ENCODE measurements at regions of chr11 and their contacts with region 1.

Region 1: GRCh38 chr11:61891331-61892084 is at the start of gene FADS3:
- DNase-seq: peak; percentile 94
- ATAC-seq: peak; percentile 91
- total RNA-seq, gene FADS3: 76.0 TPM

Region 2: GRCh38 chr11:61792310-61793085 is 99.0 kb before region 1 on chr11 and contains the starts of genes FEN1 and TMEM258:
- intact Hi-C with region 1: loop called (anchors 5 kb)
- DNase-seq: peak; percentile 93
- ATAC-seq: peak; percentile 95
- total RNA-seq, gene FEN1: 6.3 TPM
- total RNA-seq, gene TMEM258: 123 TPM

Region 3: GRCh38 chr11:61816736-61817455 is 74.6 kb before region 1 on chr11 and contains the start of gene FADS1:
- intact Hi-C with region 1: loop called (anchors 5 kb)
- DNase-seq: peak; percentile 94
- ATAC-seq: peak; percentile 69
- total RNA-seq, gene FADS1: 21.3 TPM

Measured in Right ventricle myocardium superior (tissue), 1 donor.